GM10248 (cell line): ENCODE measurements at regions of chr9 and their contacts with region 1.

Region 1: DNA sequence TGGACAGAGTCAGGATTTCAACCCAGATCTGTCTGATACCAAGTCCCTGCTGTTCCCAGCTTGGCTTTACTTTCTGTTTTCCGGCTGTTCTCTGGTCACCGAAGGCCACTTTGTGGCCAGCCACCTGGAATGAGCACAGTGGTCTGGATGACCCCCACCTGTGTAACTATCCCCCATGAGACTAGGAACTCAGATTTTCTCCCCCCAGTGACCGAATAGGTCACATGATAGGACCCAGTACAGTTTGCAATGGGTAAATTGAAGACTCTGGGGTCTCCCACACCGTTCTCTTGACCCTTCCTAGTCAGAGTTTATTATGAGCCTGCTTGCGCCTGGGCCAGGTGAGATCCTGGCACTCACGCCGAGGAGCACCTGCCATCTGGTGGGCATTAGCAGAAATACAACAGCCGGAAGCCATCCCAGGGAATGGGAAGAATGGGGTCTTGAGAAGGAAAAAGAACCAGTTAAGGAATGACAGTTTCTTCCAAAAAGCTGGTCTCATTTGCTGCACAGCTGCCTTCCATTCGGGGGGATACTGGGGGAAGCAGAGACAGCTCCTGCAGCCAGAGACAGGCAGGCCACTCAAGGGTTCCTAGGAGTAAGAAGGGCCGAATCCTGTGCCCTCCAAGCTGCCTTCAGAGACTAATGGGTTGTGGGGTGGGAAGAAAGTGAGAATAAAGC is 7.1 kb downstream of the PHYHD1 start:
- DNase-seq: peak; percentile 79
- CTCF ChIP-seq: peak; percentile 93

Region 2: DNA sequence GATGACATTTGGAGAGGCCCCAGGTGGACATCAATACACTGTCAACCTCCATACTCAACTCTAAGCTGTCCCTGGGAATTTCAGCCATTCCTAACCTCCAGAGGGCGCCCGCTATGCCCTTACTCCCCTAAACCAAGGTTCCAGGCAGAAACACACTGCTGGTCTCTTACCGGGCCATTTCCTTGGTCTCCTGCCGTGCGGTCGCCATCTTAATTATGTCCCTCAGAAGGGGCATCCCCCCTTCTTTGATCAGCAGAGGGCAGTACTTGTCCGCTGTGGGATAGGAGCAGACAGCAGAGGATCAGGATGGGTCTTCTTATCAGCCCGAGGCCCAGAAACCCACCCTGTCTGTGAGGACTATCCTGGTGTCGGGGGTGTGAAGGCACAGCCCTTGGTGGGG is 194.6 kb before region 1 on chr9:
- CTCF ChIA-PET with region 1: interaction called, 11 read pairs
- POLR2A ChIA-PET with region 1: no interaction called
- DNase-seq: no peak
- CTCF ChIP-seq: peak; percentile 49

Region 3: GRCh38 chr9:128875790-128876160 is 52.1 kb before region 1 on chr9:
- CTCF ChIA-PET with region 1: interaction called, 15 read pairs
- POLR2A ChIA-PET with region 1: no interaction called
- DNase-seq: no peak
- CTCF ChIP-seq: no peak

Region 4: GRCh38 chr9:128947422-128948301 is 19.8 kb after region 1 on chr9 and contains the starts of genes DOLK and NUP188:
- CTCF ChIA-PET with region 1: interaction called, 26 read pairs
- POLR2A ChIA-PET with region 1: no interaction called
- DNase-seq: peak; percentile 100
- CTCF ChIP-seq: no peak

Region 5: DNA sequence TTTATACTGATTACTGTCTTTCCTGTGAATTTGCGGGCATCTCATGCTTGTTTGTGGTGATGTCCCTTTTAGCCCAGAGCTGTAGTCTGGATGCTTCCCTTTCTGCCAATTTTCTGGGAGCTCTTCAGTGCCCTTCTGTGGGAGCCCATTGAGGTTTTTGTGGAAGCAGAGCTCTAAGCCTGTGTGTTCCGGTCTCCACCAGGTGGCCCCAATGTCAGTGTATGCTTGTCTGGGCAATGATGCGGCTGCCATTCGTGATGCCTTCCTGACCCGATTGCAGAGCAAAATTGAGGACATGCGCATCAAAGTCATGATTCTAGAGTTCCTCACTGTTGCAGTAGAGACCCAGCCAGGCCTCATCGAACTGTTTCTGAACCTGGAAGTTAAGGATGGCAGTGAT is 65.1 kb after region 1 on chr9:
- CTCF ChIA-PET with region 1: no interaction called
- POLR2A ChIA-PET with region 1: no interaction called
- DNase-seq: no peak
- CTCF ChIP-seq: peak; percentile 25

Region 6: GRCh38 chr9:129071526-129072131 is 143.8 kb after region 1 on chr9:
- CTCF ChIA-PET with region 1: no interaction called
- POLR2A ChIA-PET with region 1: no interaction called
- DNase-seq: no peak
- CTCF ChIP-seq: no peak